Right cardiac atrium (tissue), 5 donors: ENCODE measurements at regions of chr2 and their contacts with region 1.

Region 1: GRCh38 chr2:98444436-98445176 is at the start of gene INPP4A:
- DNase-seq: peak; percentile 77 to 92 (median 92)
- ATAC-seq: peak; percentile 94 to 96
- H3K4me3 ChIP-seq: peak within 1 kb of the TSS; percentile 64
- H3K27ac ChIP-seq: peak within 1 kb of the TSS; percentile 50
- H3K4me1 ChIP-seq: peaks cover 3% of the 10 kb centered on the region
- H3K27me3 ChIP-seq: no peaks in the 10 kb centered on the region
- total RNA-seq, gene INPP4A: 15.7 to 18.1 (median 15.8) TPM

Region 2: GRCh38 chr2:98334439-98335078 is 110.0 kb before region 1 on chr2:
- intact Hi-C with region 1: no loop called
- DNase-seq: no peak
- ATAC-seq: no peak
- H3K4me3 ChIP-seq: no peak overlapping the region
- H3K27ac ChIP-seq: no peak overlapping the region
- H3K4me1 ChIP-seq: no peaks in the 10 kb centered on the region
- H3K27me3 ChIP-seq: no peaks in the 10 kb centered on the region

Region 3: GRCh38 chr2:98568881-98569793 is 124.5 kb after region 1 on chr2:
- intact Hi-C with region 1: loop called in 2 of 4 experiments (anchors 10 kb)
- DNase-seq: peak; percentile 46 to 82 (median 81)
- ATAC-seq: peak in 1 of 2 donors; percentile 43
- H3K4me3 ChIP-seq: no peak overlapping the region
- H3K27ac ChIP-seq: no peak overlapping the region
- H3K4me1 ChIP-seq: no peaks in the 10 kb centered on the region
- H3K27me3 ChIP-seq: no peaks in the 10 kb centered on the region

Region 4: DNA sequence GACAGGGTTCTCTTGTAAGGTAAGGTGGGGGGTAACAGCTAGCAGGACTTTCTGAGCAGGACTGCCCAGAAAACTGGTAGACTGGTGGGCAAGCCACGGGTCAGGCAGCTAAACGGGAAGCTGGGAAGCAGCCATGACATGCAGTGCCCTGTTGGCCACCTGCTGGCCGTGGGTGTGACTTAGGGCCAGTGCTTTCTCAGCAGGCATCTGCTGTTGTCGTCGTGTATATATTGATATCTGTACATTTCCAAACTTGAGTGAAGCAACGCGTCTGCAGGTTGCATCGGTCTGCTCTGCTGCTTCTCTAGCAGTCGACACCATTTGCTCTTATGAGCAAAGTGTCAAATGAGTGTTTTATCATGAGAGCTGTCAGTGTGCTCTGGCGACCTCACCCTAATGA is 132.7 kb after region 1 on chr2:
- intact Hi-C with region 1: loop called in 1 of 4 experiments (anchors 10 kb)
- DNase-seq: no peak
- ATAC-seq: peak in 1 of 2 donors; percentile 6
- H3K4me3 ChIP-seq: no peak overlapping the region
- H3K27ac ChIP-seq: no peak overlapping the region
- H3K4me1 ChIP-seq: no peaks in the 10 kb centered on the region
- H3K27me3 ChIP-seq: no peaks in the 10 kb centered on the region